HepG2 (cell line): ENCODE measurements at regions of chr11 and their contacts with region 1.

Region 1: GRCh38 chr11:130434521-130435223 is 6.3 kb upstream of the ADAMTS8 start:
- DNase-seq: peak; percentile 63
- ATAC-seq: peak; percentile 90
- H3K4me3 ChIP-seq: peak overlapping the region; percentile 50 to 73 (median 58)
- H3K27ac ChIP-seq: no peak overlapping the region
- H3K4me1 ChIP-seq: no peaks in the 10 kb centered on the region
- H3K27me3 ChIP-seq: peaks cover 0 to 12% of the 10 kb centered on the region in 2 experiments; a peak in 4 of 5 replicates
- CTCF ChIP-seq: peak; percentile 83
- EP300 ChIP-seq: no peak
- POLR2A ChIP-seq: no peak
- RAD21 ChIP-seq: peak; percentile 42

Region 2: DNA sequence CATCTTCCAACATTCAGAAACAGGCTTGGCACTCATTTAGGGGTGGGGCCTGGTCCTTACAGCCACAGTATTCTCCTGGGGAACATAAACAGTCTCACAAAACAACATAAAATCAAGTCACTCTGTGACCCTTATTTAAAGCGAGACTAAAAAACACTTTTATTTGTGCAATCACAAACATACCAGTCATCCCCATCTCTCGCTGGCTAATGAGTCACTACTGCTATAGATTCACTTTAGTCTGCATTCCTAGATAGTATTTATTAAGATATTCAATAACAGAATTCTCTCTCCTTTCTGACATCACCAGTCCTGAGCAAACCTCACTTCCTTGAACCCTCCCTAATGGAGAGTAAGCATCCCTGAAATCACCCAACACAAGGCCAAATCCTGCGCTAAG is 187.9 kb before region 1 on chr11:
- CTCF ChIA-PET with region 1: no interaction called
- POLR2A ChIA-PET with region 1: no interaction called
- in situ Hi-C with region 1: no loop called
- intact Hi-C with region 1: no loop called
- DNase-seq: no peak
- ATAC-seq: no peak
- H3K4me3 ChIP-seq: no peak overlapping the region
- H3K27ac ChIP-seq: no peak overlapping the region
- H3K4me1 ChIP-seq: peaks cover 10% of the 10 kb centered on the region; the same call in 1 of the 2 replicates
- H3K27me3 ChIP-seq: no peaks in the 10 kb centered on the region
- CTCF ChIP-seq: no peak
- EP300 ChIP-seq: no peak
- POLR2A ChIP-seq: no peak
- RAD21 ChIP-seq: no peak

Region 3: GRCh38 chr11:130390071-130390758 is 44.5 kb before region 1 on chr11:
- CTCF ChIA-PET with region 1: no interaction called
- POLR2A ChIA-PET with region 1: no interaction called
- in situ Hi-C with region 1: no loop called
- intact Hi-C with region 1: no loop called
- DNase-seq: peak; percentile 66
- ATAC-seq: peak; percentile 76
- H3K4me3 ChIP-seq: no peak overlapping the region
- H3K27ac ChIP-seq: no peak overlapping the region
- H3K4me1 ChIP-seq: peaks cover 26% of the 10 kb centered on the region
- H3K27me3 ChIP-seq: peaks cover 0 to 4% of the 10 kb centered on the region in 2 experiments; a peak in 1 of 5 replicates
- CTCF ChIP-seq: peak; percentile 39
- EP300 ChIP-seq: peak in 1 of 2 experiments; percentile 16; a peak in 1 of 4 replicates
- POLR2A ChIP-seq: no peak
- RAD21 ChIP-seq: no peak

Region 4: GRCh38 chr11:130827451-130828377 is 393.0 kb after region 1 on chr11:
- CTCF ChIA-PET with region 1: interaction called, 18 read pairs
- POLR2A ChIA-PET with region 1: no interaction called
- in situ Hi-C with region 1: loop called (anchors 10 kb)
- intact Hi-C with region 1: loop called (anchors 1 kb)
- DNase-seq: peak; percentile 57
- ATAC-seq: peak; percentile 94
- H3K4me3 ChIP-seq: no peak overlapping the region
- H3K27ac ChIP-seq: no peak overlapping the region
- H3K4me1 ChIP-seq: no peaks in the 10 kb centered on the region
- H3K27me3 ChIP-seq: peaks cover 4 to 14% of the 10 kb centered on the region in 2 experiments; a peak in 4 of 5 replicates
- CTCF ChIP-seq: peak; percentile 63
- EP300 ChIP-seq: no peak
- POLR2A ChIP-seq: no peak
- RAD21 ChIP-seq: no peak

Region 5: GRCh38 chr11:130861902-130862860 is 427.5 kb after region 1 on chr11:
- CTCF ChIA-PET with region 1: interaction called, 255 read pairs
- POLR2A ChIA-PET with region 1: no interaction called
- in situ Hi-C with region 1: loop called (anchors 5 kb)
- intact Hi-C with region 1: loop called (anchors 1 kb)
- DNase-seq: peak; percentile 83
- ATAC-seq: peak; percentile 82
- H3K4me3 ChIP-seq: no peak overlapping the region
- H3K27ac ChIP-seq: no peak overlapping the region
- H3K4me1 ChIP-seq: peaks cover 17% of the 10 kb centered on the region
- H3K27me3 ChIP-seq: peaks cover 0 to 13% of the 10 kb centered on the region in 2 experiments; a peak in 3 of 5 replicates
- CTCF ChIP-seq: peak; percentile 99
- EP300 ChIP-seq: no peak
- POLR2A ChIP-seq: no peak
- RAD21 ChIP-seq: peak; percentile 98

Region 6: GRCh38 chr11:130894322-130895025 is 459.8 kb after region 1 on chr11:
- CTCF ChIA-PET with region 1: interaction called, 113 read pairs
- POLR2A ChIA-PET with region 1: no interaction called
- in situ Hi-C with region 1: loop called (anchors 5 kb)
- intact Hi-C with region 1: loop called (anchors 1 kb)
- DNase-seq: peak; percentile 71
- ATAC-seq: peak; percentile 98
- H3K4me3 ChIP-seq: no peak overlapping the region
- H3K27ac ChIP-seq: no peak overlapping the region
- H3K4me1 ChIP-seq: no peaks in the 10 kb centered on the region
- H3K27me3 ChIP-seq: no peaks in the 10 kb centered on the region
- CTCF ChIP-seq: peak; percentile 89
- EP300 ChIP-seq: no peak
- POLR2A ChIP-seq: no peak
- RAD21 ChIP-seq: peak; percentile 82